ENCODE measurements at regions of chr19 and their contacts with region 1.

Region 1: GRCh38 chr19:17052439-17053210 is 22.6 kb downstream of the HAUS8 start:
- DNase-seq: peak; percentile 68
- H3K4me3 ChIP-seq: no peak overlapping the region
- H3K27ac ChIP-seq: no peak overlapping the region
- H3K4me1 ChIP-seq: no peaks in the 10 kb centered on the region
- H3K27me3 ChIP-seq: no peaks in the 10 kb centered on the region
- CTCF ChIP-seq: peak; percentile 61

Region 2: GRCh38 chr19:16778796-16779411 is 273.7 kb before region 1 on chr19:
- CTCF ChIA-PET with region 1: interaction called, 3 read pairs
- POLR2A ChIA-PET with region 1: no interaction called
- intact Hi-C with region 1: loop called (anchors 2 kb)
- DNase-seq: peak; percentile 77
- H3K4me3 ChIP-seq: no peak overlapping the region
- H3K27ac ChIP-seq: no peak overlapping the region
- H3K4me1 ChIP-seq: no peaks in the 10 kb centered on the region
- H3K27me3 ChIP-seq: no peaks in the 10 kb centered on the region
- CTCF ChIP-seq: peak; percentile 74

Region 3: GRCh38 chr19:16836115-16837034 is 216.2 kb before region 1 on chr19:
- CTCF ChIA-PET with region 1: no interaction called
- POLR2A ChIA-PET with region 1: no interaction called
- intact Hi-C with region 1: no loop called
- DNase-seq: no peak
- H3K4me3 ChIP-seq: no peak overlapping the region
- H3K27ac ChIP-seq: no peak overlapping the region
- H3K4me1 ChIP-seq: no peaks in the 10 kb centered on the region
- H3K27me3 ChIP-seq: no peaks in the 10 kb centered on the region
- CTCF ChIP-seq: peak; percentile 40

Measured in A673 (cell line).